BJ (cell line): ENCODE measurements at regions of chr9 and their contacts with region 1.

Region 1: DNA sequence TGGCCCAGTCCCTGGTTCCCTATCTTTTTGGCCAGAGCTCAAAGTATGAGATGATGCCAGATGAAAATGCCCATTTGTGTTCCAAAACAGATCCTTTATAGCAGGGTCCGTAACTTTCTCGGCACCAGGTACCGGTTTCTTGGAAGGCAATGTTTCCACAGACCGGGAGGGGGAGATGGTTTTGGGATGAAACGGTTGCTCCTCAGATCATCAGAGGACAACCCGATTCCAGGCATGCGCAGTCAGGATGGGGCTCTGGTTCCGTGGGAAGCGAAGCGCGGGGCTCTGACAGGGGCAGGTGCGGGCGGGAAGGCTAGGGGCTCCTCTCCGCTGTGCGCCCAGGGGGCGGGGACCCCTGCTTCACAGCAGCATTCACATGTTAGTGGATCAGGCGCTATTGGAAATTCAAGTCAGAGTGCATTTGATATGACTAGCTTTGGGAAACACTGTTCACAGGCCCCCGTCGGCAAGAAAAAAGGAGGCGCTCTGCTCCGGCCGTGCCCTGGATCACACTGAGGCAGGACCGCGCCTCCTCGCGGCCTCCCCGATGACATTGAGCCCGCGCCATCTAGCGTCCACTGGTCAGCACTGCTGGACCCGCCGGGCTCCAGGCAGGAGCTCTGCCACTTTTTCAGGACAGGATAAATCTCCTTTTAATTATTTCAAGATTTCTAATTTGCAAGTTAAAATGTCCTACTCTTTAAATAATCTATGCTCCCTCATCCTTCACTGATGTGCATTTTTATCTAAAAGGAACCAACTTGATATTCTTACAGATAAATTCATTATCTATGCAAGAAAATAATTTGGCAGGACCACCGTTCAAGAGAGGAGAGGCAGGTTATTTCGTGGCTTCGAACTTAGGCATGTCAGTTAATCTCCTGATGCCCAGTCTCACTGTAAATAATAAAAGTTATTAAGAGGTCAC is 190.0 kb downstream of the FANCC start:
- DNase-seq: no peak
- H3K4me3 ChIP-seq: peak overlapping the region; percentile 41
- H3K27me3 ChIP-seq: no peaks in the 10 kb centered on the region
- CTCF ChIP-seq: peak; percentile 100

Region 2: GRCh38 chr9:94681508-94681907 is 446.0 kb before region 1 on chr9:
- CTCF ChIA-PET with region 1: interaction called, 377 read pairs
- POLR2A ChIA-PET with region 1: interaction called, 3 read pairs
- DNase-seq: no peak
- H3K4me3 ChIP-seq: no peak overlapping the region
- H3K27me3 ChIP-seq: no peaks in the 10 kb centered on the region
- CTCF ChIP-seq: peak; percentile 80

Region 3: DNA sequence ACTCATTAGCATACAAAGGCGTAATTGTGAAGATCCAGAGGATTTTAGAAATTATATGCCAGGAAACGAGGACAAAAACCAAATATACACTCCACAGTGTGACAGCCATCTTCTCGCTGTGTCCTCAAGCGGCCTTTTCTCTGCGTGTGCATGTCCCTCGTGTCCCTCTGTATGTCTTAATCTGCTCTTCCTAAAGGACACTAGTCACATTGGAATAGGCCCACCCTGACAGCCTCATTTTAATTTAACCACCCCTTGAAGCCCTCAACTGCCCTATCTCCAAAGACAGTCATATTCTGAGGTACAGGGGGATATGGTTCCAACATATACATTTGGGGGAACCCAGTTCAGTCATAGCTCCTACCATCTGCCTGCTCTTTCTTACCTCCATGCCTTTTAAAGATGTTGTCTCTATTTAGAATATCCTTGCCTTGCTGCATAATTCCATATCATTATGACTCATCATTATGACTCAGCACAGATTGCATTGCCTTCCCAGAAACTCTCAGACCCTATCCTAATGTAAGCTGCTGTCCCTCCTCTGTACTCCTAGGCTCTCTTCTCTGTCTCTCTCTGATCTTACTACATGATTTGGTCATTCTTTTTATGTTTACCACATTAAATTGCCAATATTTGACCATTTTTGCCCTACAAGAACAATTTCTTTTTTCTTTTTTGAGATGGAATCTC is 190.2 kb before region 1 on chr9:
- CTCF ChIA-PET with region 1: no interaction called
- POLR2A ChIA-PET with region 1: no interaction called
- DNase-seq: peak; percentile 76
- H3K4me3 ChIP-seq: no peak overlapping the region
- H3K27me3 ChIP-seq: no peaks in the 10 kb centered on the region
- CTCF ChIP-seq: no peak

Region 4: GRCh38 chr9:95092262-95093072 is 35.0 kb before region 1 on chr9:
- CTCF ChIA-PET with region 1: interaction called, 11 read pairs
- POLR2A ChIA-PET with region 1: no interaction called
- DNase-seq: peak; percentile 65
- H3K4me3 ChIP-seq: no peak overlapping the region
- H3K27me3 ChIP-seq: no peaks in the 10 kb centered on the region
- CTCF ChIP-seq: no peak

Region 5: GRCh38 chr9:95143591-95144561 is 16.4 kb after region 1 on chr9:
- CTCF ChIA-PET with region 1: interaction called, 22 read pairs
- POLR2A ChIA-PET with region 1: no interaction called
- DNase-seq: peak; percentile 64
- H3K4me3 ChIP-seq: no peak overlapping the region
- H3K27me3 ChIP-seq: no peaks in the 10 kb centered on the region
- CTCF ChIP-seq: no peak

Region 6: DNA sequence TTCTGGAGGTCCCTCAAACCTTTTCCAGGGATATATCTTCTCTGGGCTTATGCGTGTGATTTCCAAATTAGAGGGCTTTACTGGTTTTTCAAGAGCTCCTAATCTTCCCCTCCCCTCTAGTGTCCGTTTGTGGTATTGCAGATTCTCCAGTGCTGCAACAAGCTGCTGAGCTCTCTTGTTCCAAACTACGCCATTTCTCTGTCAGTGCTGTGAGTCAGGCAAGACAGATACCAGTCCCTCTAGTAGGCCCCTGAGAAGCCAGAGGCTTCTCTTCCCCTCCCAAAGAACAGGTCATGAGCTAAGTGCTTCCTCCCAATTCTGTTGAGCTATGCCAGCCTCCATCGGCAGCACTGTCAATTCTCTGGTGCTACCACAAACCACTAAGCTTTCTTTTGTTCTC is 40.5 kb after region 1 on chr9:
- CTCF ChIA-PET with region 1: interaction called, 17 read pairs
- POLR2A ChIA-PET with region 1: no interaction called
- DNase-seq: peak; percentile 50
- H3K4me3 ChIP-seq: no peak overlapping the region
- H3K27me3 ChIP-seq: no peaks in the 10 kb centered on the region
- CTCF ChIP-seq: peak; percentile 91

Region 7: DNA sequence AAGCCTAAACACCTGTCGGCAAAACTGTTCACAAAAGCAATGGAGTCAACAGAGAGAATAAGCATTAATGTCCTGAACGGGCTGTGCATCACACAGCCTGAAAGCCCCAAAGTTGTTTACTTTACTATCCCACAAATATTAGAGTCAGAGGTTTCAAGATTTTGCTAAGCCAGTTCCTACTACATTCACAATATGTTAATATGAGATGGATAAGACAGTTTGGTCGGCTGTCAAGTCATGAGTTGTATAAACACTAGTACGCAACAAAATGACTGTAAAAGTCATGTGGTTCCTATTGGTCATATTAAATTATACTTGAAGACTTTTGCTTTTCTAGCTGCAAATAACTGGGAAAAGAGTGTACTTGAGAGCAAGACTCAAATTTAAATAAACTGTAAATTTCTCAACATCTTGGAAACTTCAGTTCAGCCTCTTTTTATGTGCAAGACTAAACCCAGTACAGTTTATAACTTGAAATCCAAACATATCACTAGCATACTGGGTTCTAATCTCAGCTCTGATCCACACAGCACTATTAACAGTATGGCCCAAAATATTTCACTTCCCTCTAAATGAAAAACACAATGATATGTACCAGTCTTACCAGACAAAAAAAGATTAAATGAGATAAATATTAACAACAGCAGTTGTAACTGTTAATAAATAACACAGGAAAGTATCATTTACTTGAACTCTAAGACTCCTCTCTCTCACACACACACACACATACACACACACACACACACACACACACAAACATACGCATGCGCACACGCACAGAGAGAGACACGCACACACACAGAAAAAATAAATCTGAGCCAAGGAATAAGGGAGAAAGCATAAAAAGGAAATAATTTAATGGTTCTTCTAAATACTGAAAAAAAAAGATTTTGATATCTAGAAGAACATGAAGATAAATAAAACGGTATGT is 156.9 kb after region 1 on chr9:
- CTCF ChIA-PET with region 1: no interaction called
- POLR2A ChIA-PET with region 1: no interaction called
- DNase-seq: peak; percentile 39
- H3K4me3 ChIP-seq: no peak overlapping the region
- H3K27me3 ChIP-seq: no peaks in the 10 kb centered on the region
- CTCF ChIP-seq: no peak